Naive thymus-derived CD4-positive, alpha-beta T cell (primary cell): ENCODE measurements at regions of chr2 and their contacts with region 1.

Region 1: GRCh38 chr2:112481050-112481527 is 867 bp upstream of the TTL start:
- DNase-seq: peak; percentile 66 to 84 (median 82)
- ATAC-seq: peak; percentile 85
- H3K4me3 ChIP-seq: peak overlapping the region; percentile 73
- H3K4me3 Mint-ChIP-seq: peak overlapping the region; percentile 88 to 99 (median 94)
- H3K27ac ChIP-seq: peak overlapping the region; percentile 69
- H3K27ac Mint-ChIP-seq: peak overlapping the region; percentile 81 to 96 (median 92)
- H3K4me1 ChIP-seq: peaks cover 14 to 16% of the 10 kb centered on the region in 2 donors
- H3K4me1 Mint-ChIP-seq: peaks cover 17 to 34% (median 20%) of the 10 kb centered on the region in 7 donors
- H3K27me3 ChIP-seq: no peaks in the 10 kb centered on the region
- H3K27me3 Mint-ChIP-seq: peaks cover 0 to 4% (median 0%) of the 10 kb centered on the region in 5 donors

Region 2: DNA sequence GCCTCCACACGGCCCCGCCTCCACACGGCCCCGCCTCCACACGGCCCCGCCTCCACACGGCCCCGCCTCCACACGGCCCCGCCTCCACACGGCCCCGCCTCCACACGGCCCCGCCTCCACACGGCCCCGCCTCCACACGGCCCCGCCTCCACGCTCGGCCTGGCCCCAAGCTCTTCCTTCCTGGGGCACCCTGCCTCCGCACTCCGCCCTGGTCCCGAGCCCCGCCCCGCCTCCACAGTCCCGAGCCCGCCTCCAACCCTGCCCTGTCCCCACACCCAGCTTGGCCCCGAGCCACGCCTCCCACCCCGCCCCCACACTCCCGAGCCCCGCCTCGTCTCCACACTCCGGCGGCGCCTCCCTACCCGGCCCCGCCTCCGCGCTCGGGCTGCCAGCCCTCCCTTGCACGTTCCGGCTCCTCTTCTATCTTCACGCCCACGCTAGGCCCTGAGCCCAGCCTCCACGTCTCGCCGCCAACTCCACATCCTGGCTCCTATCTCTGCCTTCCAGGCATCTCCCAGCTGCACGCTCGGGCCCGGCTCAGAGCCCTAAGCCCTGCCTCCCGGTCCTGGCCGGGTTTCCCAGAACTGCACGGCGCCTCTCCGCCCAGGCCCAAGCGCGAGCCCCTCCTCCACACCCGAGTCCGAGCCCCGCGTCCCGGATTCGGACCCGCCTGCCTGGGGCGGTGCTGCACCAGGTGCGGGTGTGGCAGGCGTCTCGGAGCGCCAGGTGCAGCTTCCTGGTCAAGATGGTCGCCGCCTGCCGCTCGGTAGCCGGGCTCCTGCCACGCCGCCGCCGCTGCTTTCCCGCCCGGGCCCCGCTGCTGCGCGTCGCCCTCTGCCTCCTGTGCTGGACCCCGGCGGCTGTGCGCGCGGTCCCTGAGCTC is 426.0 kb before region 1 on chr2 and contains the start of gene TMEM87B:
- CTCF ChIA-PET with region 1: no interaction called
- POLR2A ChIA-PET with region 1: no interaction called
- intact Hi-C with region 1: loop called (anchors 1 kb)
- DNase-seq: peak; percentile 90 to 98 (median 96)
- ATAC-seq: peak; percentile 80
- H3K4me3 ChIP-seq: peak within 1 kb of the TSS; percentile 85
- H3K4me3 Mint-ChIP-seq: peak within 1 kb of the TSS; percentile 80 to 100 (median 95)
- H3K27ac ChIP-seq: peak within 1 kb of the TSS; percentile 82
- H3K27ac Mint-ChIP-seq: peak within 1 kb of the TSS; percentile 92 to 100 (median 98)
- H3K4me1 ChIP-seq: peaks cover 16 to 19% of the 10 kb centered on the region in 2 donors
- H3K4me1 Mint-ChIP-seq: peaks cover 33 to 48% (median 42%) of the 10 kb centered on the region in 7 donors
- H3K27me3 ChIP-seq: no peaks in the 10 kb centered on the region
- H3K27me3 Mint-ChIP-seq: peaks cover 0 to 2% (median 0%) of the 10 kb centered on the region in 5 donors
- total RNA-seq, gene TMEM87B: 14.0 to 26.9 (median 17.4) TPM

Region 3: GRCh38 chr2:112166806-112167499 is 314.1 kb before region 1 on chr2:
- CTCF ChIA-PET with region 1: no interaction called
- POLR2A ChIA-PET with region 1: no interaction called
- intact Hi-C with region 1: no loop called
- DNase-seq: peak in 2 of 9 donors; percentile 22 to 25
- ATAC-seq: peak; percentile 58
- H3K4me3 ChIP-seq: no peak overlapping the region
- H3K4me3 Mint-ChIP-seq: peak overlapping the region in 1 of 10 donors; percentile 7
- H3K27ac ChIP-seq: no peak overlapping the region
- H3K27ac Mint-ChIP-seq: peak overlapping the region; percentile 17 to 88 (median 33)
- H3K4me1 ChIP-seq: no peaks in the 10 kb centered on the region
- H3K4me1 Mint-ChIP-seq: peaks cover 7 to 22% (median 10%) of the 10 kb centered on the region in 7 donors
- H3K27me3 ChIP-seq: no peaks in the 10 kb centered on the region
- H3K27me3 Mint-ChIP-seq: no peaks in the 10 kb centered on the region

Region 4: GRCh38 chr2:112254466-112255239 is 226.4 kb before region 1 on chr2 and contains the start of gene ZC3H8:
- CTCF ChIA-PET with region 1: no interaction called
- POLR2A ChIA-PET with region 1: no interaction called
- intact Hi-C with region 1: loop called (anchors 1 kb)
- DNase-seq: peak; percentile 92 to 98 (median 97)
- ATAC-seq: peak; percentile 95
- H3K4me3 ChIP-seq: peak within 1 kb of the TSS; percentile 74
- H3K4me3 Mint-ChIP-seq: peak within 1 kb of the TSS in 9 of 10 donors; percentile 84 to 92 (median 90)
- H3K27ac ChIP-seq: peak within 1 kb of the TSS; percentile 90
- H3K27ac Mint-ChIP-seq: peak within 1 kb of the TSS; percentile 80 to 97 (median 94)
- H3K4me1 ChIP-seq: peaks cover 13 to 19% of the 10 kb centered on the region in 2 donors
- H3K4me1 Mint-ChIP-seq: peaks cover 5 to 32% (median 15%) of the 10 kb centered on the region in 7 donors
- H3K27me3 ChIP-seq: no peaks in the 10 kb centered on the region
- H3K27me3 Mint-ChIP-seq: peaks cover 0 to 3% (median 0%) of the 10 kb centered on the region in 5 donors
- total RNA-seq, gene ZC3H8: 8.8 to 23.6 (median 17.2) TPM

Region 5: GRCh38 chr2:112275306-112275886 is 205.7 kb before region 1 on chr2 and contains the start of gene ZC3H6:
- CTCF ChIA-PET with region 1: no interaction called
- POLR2A ChIA-PET with region 1: interaction called, 3 read pairs
- intact Hi-C with region 1: loop called (anchors 2 to 5 kb)
- DNase-seq: peak; percentile 96 to 100 (median 100)
- ATAC-seq: peak; percentile 98
- H3K4me3 ChIP-seq: peak within 1 kb of the TSS; percentile 99
- H3K4me3 Mint-ChIP-seq: peak within 1 kb of the TSS; percentile 85 to 95 (median 94)
- H3K27ac ChIP-seq: peak within 1 kb of the TSS; percentile 100
- H3K27ac Mint-ChIP-seq: peak within 1 kb of the TSS; percentile 90 to 99 (median 98)
- H3K4me1 ChIP-seq: peaks cover 14 to 18% of the 10 kb centered on the region in 2 donors
- H3K4me1 Mint-ChIP-seq: peaks cover 9 to 36% (median 25%) of the 10 kb centered on the region in 7 donors
- H3K27me3 ChIP-seq: no peaks in the 10 kb centered on the region
- H3K27me3 Mint-ChIP-seq: peaks cover 0 to 3% (median 0%) of the 10 kb centered on the region in 5 donors
- total RNA-seq, gene ZC3H6: 11.8 to 42.1 (median 23.7) TPM

Region 6: GRCh38 chr2:112465382-112465781 is 15.7 kb before region 1 on chr2:
- CTCF ChIA-PET with region 1: no interaction called
- POLR2A ChIA-PET with region 1: no interaction called
- intact Hi-C with region 1: no loop called
- DNase-seq: no peak
- ATAC-seq: no peak
- H3K4me3 ChIP-seq: no peak overlapping the region
- H3K4me3 Mint-ChIP-seq: no peak overlapping the region
- H3K27ac ChIP-seq: no peak overlapping the region
- H3K27ac Mint-ChIP-seq: no peak overlapping the region
- H3K4me1 ChIP-seq: no peaks in the 10 kb centered on the region
- H3K4me1 Mint-ChIP-seq: no peaks in the 10 kb centered on the region
- H3K27me3 ChIP-seq: no peaks in the 10 kb centered on the region
- H3K27me3 Mint-ChIP-seq: peaks cover 10 to 65% (median 12%) of the 10 kb centered on the region in 5 donors

Region 7: DNA sequence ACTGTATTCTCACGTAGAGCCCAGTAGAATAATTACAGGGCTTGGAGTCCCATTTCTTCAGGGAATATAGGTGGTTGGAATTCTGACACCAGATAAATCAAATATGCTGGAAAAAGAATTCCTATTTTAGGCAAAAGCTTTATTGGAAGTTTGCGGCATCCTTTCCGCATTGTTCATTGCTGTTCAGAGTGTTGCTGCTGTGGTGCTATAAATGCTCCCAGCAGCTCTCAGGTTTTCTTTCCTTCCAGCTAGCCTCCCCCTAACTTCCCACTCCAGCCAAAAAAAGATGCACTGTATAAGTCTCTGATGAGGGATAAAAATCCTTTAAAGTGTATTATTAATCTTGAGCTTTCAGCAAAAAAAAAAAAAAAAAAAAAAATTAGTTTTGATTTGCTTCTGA is 35.7 kb after region 1 on chr2:
- CTCF ChIA-PET with region 1: no interaction called
- POLR2A ChIA-PET with region 1: no interaction called
- intact Hi-C with region 1: no loop called
- DNase-seq: no peak
- ATAC-seq: no peak
- H3K4me3 ChIP-seq: no peak overlapping the region
- H3K4me3 Mint-ChIP-seq: no peak overlapping the region
- H3K27ac ChIP-seq: no peak overlapping the region
- H3K27ac Mint-ChIP-seq: no peak overlapping the region
- H3K4me1 ChIP-seq: no peaks in the 10 kb centered on the region
- H3K4me1 Mint-ChIP-seq: peaks cover 0 to 3% (median 0%) of the 10 kb centered on the region in 7 donors
- H3K27me3 ChIP-seq: no peaks in the 10 kb centered on the region
- H3K27me3 Mint-ChIP-seq: no peaks in the 10 kb centered on the region

Region 8: DNA sequence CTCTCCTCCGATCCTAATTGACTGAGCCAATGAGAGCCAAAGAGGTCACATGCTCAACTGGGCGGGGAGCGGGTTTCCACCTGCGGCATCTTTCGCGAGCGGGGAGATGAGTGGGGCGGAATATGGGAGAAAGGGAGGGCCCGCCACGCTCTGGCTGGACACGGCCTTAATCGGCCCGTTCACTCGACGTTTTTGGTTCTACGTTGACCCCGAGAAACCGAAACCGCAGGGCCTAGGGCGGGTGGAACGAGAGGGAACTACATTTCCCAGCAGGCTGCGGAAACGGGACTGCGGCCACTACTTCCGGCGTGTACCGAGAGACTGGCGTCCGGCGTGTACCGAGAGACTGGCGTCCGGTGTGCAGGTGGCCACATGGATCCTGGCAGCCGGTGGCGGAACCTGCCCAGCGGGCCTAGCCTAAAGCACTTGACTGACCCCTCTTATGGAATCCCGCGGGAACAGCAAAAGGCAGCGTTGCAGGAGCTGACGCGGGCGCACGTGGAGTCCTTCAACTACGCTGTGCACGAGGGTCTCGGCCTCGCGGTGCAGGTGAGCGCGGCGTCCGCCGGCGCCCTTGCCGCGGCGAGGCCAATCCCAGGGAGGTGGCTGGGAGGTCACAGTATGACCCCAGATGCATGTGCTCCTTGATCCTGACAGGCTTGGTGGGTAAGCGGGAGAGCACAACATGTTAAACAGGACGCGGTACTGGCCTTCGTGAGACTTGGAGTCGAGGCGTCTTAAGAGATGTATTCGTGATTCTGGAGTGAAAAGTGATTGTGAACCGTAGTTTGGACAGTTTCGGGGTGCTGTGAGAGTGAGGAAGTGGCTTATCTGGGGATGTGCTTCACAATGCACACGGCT is 61.3 kb after region 1 on chr2 and contains the start of gene POLR1B:
- CTCF ChIA-PET with region 1: interaction called, 3 read pairs
- POLR2A ChIA-PET with region 1: interaction called, 3 read pairs
- intact Hi-C with region 1: loop called (anchors 1 kb)
- DNase-seq: peak in 8 of 9 donors; percentile 57 to 81 (median 77)
- ATAC-seq: peak; percentile 88
- H3K4me3 ChIP-seq: peak within 1 kb of the TSS; percentile 95
- H3K4me3 Mint-ChIP-seq: no peak within 1 kb of the TSS
- H3K27ac ChIP-seq: peak within 1 kb of the TSS; percentile 89
- H3K27ac Mint-ChIP-seq: peak within 1 kb of the TSS in 1 of 9 donors; percentile 98
- H3K4me1 ChIP-seq: peaks cover 14 to 15% of the 10 kb centered on the region in 2 donors
- H3K4me1 Mint-ChIP-seq: peaks cover 12 to 24% (median 19%) of the 10 kb centered on the region in 7 donors
- H3K27me3 ChIP-seq: no peaks in the 10 kb centered on the region
- H3K27me3 Mint-ChIP-seq: no peaks in the 10 kb centered on the region
- total RNA-seq, gene POLR1B: 10.1 to 41.8 (median 25.2) TPM

Region 9: GRCh38 chr2:112645310-112646101 is 164.4 kb after region 1 on chr2 and contains the start of gene SLC20A1:
- CTCF ChIA-PET with region 1: no interaction called
- POLR2A ChIA-PET with region 1: interaction called, 3 read pairs
- intact Hi-C with region 1: loop called (anchors 5 kb)
- DNase-seq: peak; percentile 95 to 100 (median 99)
- ATAC-seq: peak; percentile 98
- H3K4me3 ChIP-seq: peak within 1 kb of the TSS; percentile 71
- H3K4me3 Mint-ChIP-seq: peak within 1 kb of the TSS; percentile 89 to 100 (median 93)
- H3K27ac ChIP-seq: peak within 1 kb of the TSS; percentile 94
- H3K27ac Mint-ChIP-seq: peak within 1 kb of the TSS; percentile 79 to 94 (median 91)
- H3K4me1 ChIP-seq: peaks cover 34 to 47% of the 10 kb centered on the region in 2 donors
- H3K4me1 Mint-ChIP-seq: peaks cover 37 to 74% (median 58%) of the 10 kb centered on the region in 7 donors
- H3K27me3 ChIP-seq: no peaks in the 10 kb centered on the region
- H3K27me3 Mint-ChIP-seq: no peaks in the 10 kb centered on the region
- total RNA-seq, gene SLC20A1: 94.4 to 164 (median 120) TPM

Region 10: GRCh38 chr2:112726497-112727190 is 245.6 kb after region 1 on chr2:
- CTCF ChIA-PET with region 1: interaction called, 3 read pairs
- POLR2A ChIA-PET with region 1: no interaction called
- intact Hi-C with region 1: loop called (anchors 1 kb)
- DNase-seq: peak; percentile 68 to 89 (median 83)
- ATAC-seq: peak; percentile 96
- H3K4me3 ChIP-seq: no peak overlapping the region
- H3K4me3 Mint-ChIP-seq: no peak overlapping the region
- H3K27ac ChIP-seq: no peak overlapping the region
- H3K27ac Mint-ChIP-seq: peak overlapping the region in 2 of 9 donors; percentile 51 to 73
- H3K4me1 ChIP-seq: no peaks in the 10 kb centered on the region
- H3K4me1 Mint-ChIP-seq: peaks cover 0 to 29% (median 0%) of the 10 kb centered on the region in 7 donors
- H3K27me3 ChIP-seq: no peaks in the 10 kb centered on the region
- H3K27me3 Mint-ChIP-seq: peaks cover 0 to 2% (median 0%) of the 10 kb centered on the region in 5 donors